ENCODE measurements at regions of chr18 and their contacts with region 1.

Region 1: GRCh38 chr18:38579764-38580163 is 1014.2 kb upstream of the CELF4 start:
- DNase-seq: no peak
- H3K4me3 ChIP-seq: no peak overlapping the region
- H3K27ac ChIP-seq: no peak overlapping the region
- H3K4me1 ChIP-seq: no peaks in the 10 kb centered on the region
- H3K27me3 ChIP-seq: no peaks in the 10 kb centered on the region
- CTCF ChIP-seq: no peak
- POLR2A ChIP-seq: no peak

Region 2: DNA sequence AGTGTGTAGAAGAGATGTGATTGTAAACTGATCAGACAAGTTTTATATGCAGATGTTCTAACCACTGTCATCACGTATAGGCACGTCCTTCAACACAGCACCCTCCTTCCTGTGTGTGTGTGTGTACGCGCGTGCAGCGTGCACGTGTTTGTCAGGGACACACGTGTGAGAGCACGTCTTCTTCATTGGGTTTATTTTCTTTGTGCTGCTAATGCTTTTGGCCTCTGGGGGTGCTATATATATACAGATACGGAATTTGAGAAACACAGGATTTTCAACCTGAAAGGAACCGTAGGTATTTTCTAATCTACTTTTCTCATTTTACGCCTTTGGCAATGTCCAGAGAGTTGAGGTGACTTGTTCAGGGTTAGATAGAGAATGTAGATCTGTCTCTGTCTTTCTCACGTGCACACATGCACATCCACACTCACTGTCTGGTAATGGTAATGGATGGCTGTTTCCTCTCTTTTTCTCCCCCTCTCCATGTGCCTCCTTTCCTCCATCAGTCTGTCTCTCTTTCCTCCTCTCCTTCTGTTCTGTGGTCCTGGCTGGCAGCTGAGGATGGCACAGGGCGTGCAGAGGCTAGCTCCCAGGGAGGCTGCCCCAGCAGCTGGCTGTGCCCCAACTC is 1000.8 kb before region 1 on chr18:
- intact Hi-C with region 1: loop called (anchors 10 kb)
- DNase-seq: peak; percentile 38
- H3K4me3 ChIP-seq: no peak overlapping the region
- H3K27ac ChIP-seq: no peak overlapping the region
- H3K4me1 ChIP-seq: peaks cover 6% of the 10 kb centered on the region
- H3K27me3 ChIP-seq: no peaks in the 10 kb centered on the region
- CTCF ChIP-seq: peak; percentile 31 to 62 (median 43)
- POLR2A ChIP-seq: no peak